Posterior vena cava (tissue), 2 donors: ENCODE measurements at regions of chr2 and their contacts with region 1.

Region 1: GRCh38 chr2:240217431-240218239 is 77.2 kb upstream of the OTOS start:
- DNase-seq: peak; percentile 72

Region 2: GRCh38 chr2:240749516-240749915 is 531.9 kb after region 1 on chr2:
- intact Hi-C with region 1: loop called in 1 of 2 experiments (anchors 5 kb)
- DNase-seq: no peak

Region 3: GRCh38 chr2:240972636-240973521 is 755.2 kb after region 1 on chr2:
- intact Hi-C with region 1: no loop called
- DNase-seq: peak; percentile 75